HepG2 (cell line): ENCODE measurements at regions of chr11 and their contacts with region 1.

Region 1: DNA sequence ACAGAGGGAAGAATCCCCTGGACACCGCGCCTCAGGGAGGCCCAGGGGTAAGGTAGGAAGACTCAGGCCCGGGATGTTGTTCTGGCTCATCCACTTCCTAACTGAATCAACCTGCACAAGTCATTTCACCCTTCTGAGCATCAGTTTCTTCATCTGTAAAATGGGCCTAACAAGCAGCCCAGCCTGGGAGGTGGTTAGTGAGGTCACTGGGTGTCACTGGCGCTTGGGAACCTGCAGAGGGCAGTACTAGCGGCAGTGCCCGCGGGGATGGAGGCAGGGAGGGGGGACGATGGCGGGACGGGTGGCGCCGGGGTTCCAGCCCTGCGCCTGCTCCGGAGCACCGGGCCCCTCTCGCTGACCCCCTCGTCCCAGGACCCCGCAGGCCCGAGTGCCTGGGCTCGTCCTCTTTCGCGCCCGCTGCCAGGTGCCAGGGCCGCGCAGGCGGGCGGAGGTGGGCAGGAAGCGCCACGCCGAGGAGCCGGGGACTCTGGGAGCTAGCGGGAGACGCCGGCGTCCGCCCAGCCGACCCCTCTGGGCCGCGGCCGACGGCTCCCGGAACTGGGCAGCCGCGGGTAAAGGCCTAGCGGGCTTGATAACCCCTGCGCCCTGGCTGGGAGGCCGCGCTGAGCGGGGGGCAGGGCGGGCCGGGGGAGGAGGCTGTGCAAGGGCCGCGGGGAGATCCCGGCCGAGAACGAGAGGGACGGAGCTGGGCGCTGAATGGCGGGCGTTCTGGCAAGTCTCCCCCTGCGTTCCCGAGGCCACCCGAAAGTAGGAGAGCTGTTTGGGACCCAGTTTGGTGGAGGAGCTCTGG is at the start of gene NLRX1:
- DNase-seq: peak; percentile 80
- ATAC-seq: peak; percentile 87
- H3K4me3 ChIP-seq: peak within 1 kb of the TSS; percentile 65 to 94 (median 78)
- H3K27ac ChIP-seq: peak within 1 kb of the TSS; percentile 86
- H3K4me1 ChIP-seq: peaks cover 39% of the 10 kb centered on the region
- H3K27me3 ChIP-seq: peaks cover 0 to 5% of the 10 kb centered on the region in 2 experiments; a peak in 1 of 5 replicates
- CTCF ChIP-seq: peak; percentile 91
- EP300 ChIP-seq: no peak; a peak in 1 of 4 replicates
- POLR2A ChIP-seq: peak; percentile 78 to 82
- RAD21 ChIP-seq: peak; percentile 59
- total RNA-seq, gene NLRX1: 6.8 and 11.0 TPM in 2 replicates

Region 2: GRCh38 chr11:118084247-118084646 is 1084.4 kb before region 1 on chr11:
- CTCF ChIA-PET with region 1: no interaction called
- POLR2A ChIA-PET with region 1: no interaction called
- in situ Hi-C with region 1: no loop called
- intact Hi-C with region 1: no loop called
- DNase-seq: peak; percentile 32
- ATAC-seq: peak; percentile 43
- H3K4me3 ChIP-seq: no peak overlapping the region
- H3K27ac ChIP-seq: no peak overlapping the region
- H3K4me1 ChIP-seq: peaks cover 81% of the 10 kb centered on the region
- H3K27me3 ChIP-seq: peaks cover 0 to 30% of the 10 kb centered on the region in 2 experiments; a peak in 4 of 5 replicates
- CTCF ChIP-seq: no peak
- EP300 ChIP-seq: no peak
- POLR2A ChIP-seq: no peak
- RAD21 ChIP-seq: no peak

Region 3: DNA sequence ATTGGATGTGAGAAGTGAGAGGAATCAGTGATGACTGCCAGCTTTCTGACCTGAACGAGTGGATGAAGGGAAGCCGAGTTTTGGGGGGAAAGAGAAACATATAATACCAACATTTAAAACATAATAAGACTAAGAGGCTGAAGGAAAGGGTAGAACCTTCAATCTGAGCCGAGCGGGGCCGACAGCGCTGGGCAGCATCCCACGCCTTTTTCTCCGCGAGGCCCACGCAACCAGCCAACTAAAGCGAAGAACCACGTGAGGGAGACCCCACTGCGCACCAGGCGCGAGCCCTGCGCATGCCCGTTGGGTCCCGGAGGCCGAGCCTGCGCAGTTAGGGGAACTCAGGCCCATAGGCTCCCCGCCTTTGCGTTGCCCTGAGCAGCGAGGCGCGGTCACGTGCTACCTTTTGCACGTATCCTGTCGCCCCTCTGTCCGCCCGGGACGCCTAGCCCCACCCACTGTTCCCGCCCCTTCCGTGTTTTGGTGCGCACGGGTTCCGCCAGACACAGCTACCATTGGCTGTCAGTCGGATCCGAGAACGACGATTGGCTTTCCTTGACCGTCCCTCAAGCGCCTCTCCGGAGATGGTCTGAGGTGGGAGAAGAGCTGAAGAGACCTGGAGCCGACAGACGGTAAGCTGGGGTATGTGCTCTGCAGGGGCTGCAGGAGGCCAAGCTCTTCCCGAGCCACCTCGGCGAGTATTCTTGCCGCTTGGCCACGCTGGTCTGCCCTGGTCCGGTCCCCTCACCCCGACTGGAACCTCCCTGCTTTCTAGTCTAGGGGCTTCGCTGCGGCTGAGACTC is 47.5 kb before region 1 on chr11 and contains the start of gene HINFP:
- CTCF ChIA-PET with region 1: no interaction called
- POLR2A ChIA-PET with region 1: interaction called, 14 read pairs
- in situ Hi-C with region 1: no loop called
- intact Hi-C with region 1: no loop called
- DNase-seq: peak; percentile 97
- ATAC-seq: peak; percentile 98
- H3K4me3 ChIP-seq: peak within 1 kb of the TSS; percentile 81 to 98 (median 84)
- H3K27ac ChIP-seq: peak within 1 kb of the TSS; percentile 55
- H3K4me1 ChIP-seq: peaks cover 36% of the 10 kb centered on the region
- H3K27me3 ChIP-seq: no peaks in the 10 kb centered on the region; a peak in 1 of 5 replicates
- CTCF ChIP-seq: no peak; the same call in 1 of the 2 replicates
- EP300 ChIP-seq: no peak
- POLR2A ChIP-seq: peak; percentile 65 to 84
- RAD21 ChIP-seq: 0 out of 2 replicates have a peak, but pooled peaks have one; percentile 20
- total RNA-seq, gene HINFP: 13.3 and 15.1 TPM in 2 replicates

Region 4: GRCh38 chr11:119181677-119182412 is 13.2 kb after region 1 on chr11:
- CTCF ChIA-PET with region 1: no interaction called
- POLR2A ChIA-PET with region 1: interaction called, 31 read pairs
- in situ Hi-C with region 1: no loop called
- intact Hi-C with region 1: no loop called
- DNase-seq: no peak
- ATAC-seq: no peak
- H3K4me3 ChIP-seq: no peak overlapping the region
- H3K27ac ChIP-seq: no peak overlapping the region
- H3K4me1 ChIP-seq: peaks cover 16% of the 10 kb centered on the region
- H3K27me3 ChIP-seq: no peaks in the 10 kb centered on the region; a peak in 1 of 5 replicates
- CTCF ChIP-seq: no peak
- EP300 ChIP-seq: no peak
- POLR2A ChIP-seq: no peak
- RAD21 ChIP-seq: no peak

Region 5: GRCh38 chr11:119196833-119197483 is 28.3 kb after region 1 on chr11:
- CTCF ChIA-PET with region 1: interaction called, 13 read pairs
- POLR2A ChIA-PET with region 1: interaction called, 5 read pairs
- in situ Hi-C with region 1: no loop called
- intact Hi-C with region 1: loop called (anchors 1 kb)
- DNase-seq: peak; percentile 83
- ATAC-seq: peak; percentile 82
- H3K4me3 ChIP-seq: no peak overlapping the region
- H3K27ac ChIP-seq: no peak overlapping the region
- H3K4me1 ChIP-seq: peaks cover 34% of the 10 kb centered on the region
- H3K27me3 ChIP-seq: peaks cover 3 to 8% of the 10 kb centered on the region in 2 experiments; a peak in 2 of 5 replicates
- CTCF ChIP-seq: peak; percentile 86
- EP300 ChIP-seq: no peak
- POLR2A ChIP-seq: no peak
- RAD21 ChIP-seq: peak; percentile 78

Region 6: GRCh38 chr11:119229288-119229672 is 60.6 kb after region 1 on chr11:
- CTCF ChIA-PET with region 1: no interaction called
- POLR2A ChIA-PET with region 1: no interaction called
- in situ Hi-C with region 1: no loop called
- intact Hi-C with region 1: no loop called
- DNase-seq: no peak
- ATAC-seq: no peak
- H3K4me3 ChIP-seq: no peak overlapping the region
- H3K27ac ChIP-seq: no peak overlapping the region
- H3K4me1 ChIP-seq: no peaks in the 10 kb centered on the region; the same call in 1 of the 2 replicates
- H3K27me3 ChIP-seq: no peaks in the 10 kb centered on the region
- CTCF ChIP-seq: no peak
- EP300 ChIP-seq: no peak
- POLR2A ChIP-seq: no peak
- RAD21 ChIP-seq: no peak